Activated T-helper 2 cell treated with anti-CD3 and anti-CD28 coated beads, Interferon-gamma antibody, Interleukin-2, Interleukin-4, amounts not matched to agents 10 μg/mL and 5 μg/mL and 100 μg/mL, durations not matched to agents 14 hours and 24 hours and 36 hours (primary cell): ENCODE measurements at regions of chr6 and their contacts with region 1.

Region 1: GRCh38 chr6:89145787-89146646 is at the start of gene PM20D2:
- DNase-seq: peak; percentile 62
- H3K4me3 Mint-ChIP-seq: peak within 1 kb of the TSS; percentile 89
- H3K27ac Mint-ChIP-seq: peak within 1 kb of the TSS; percentile 98
- H3K4me1 Mint-ChIP-seq: peaks cover 35% of the 10 kb centered on the region
- H3K27me3 Mint-ChIP-seq: peaks cover 8% of the 10 kb centered on the region
- total RNA-seq, gene PM20D2: 14.8 and 15.3 TPM in 2 replicates

Region 2: GRCh38 chr6:88982720-88983119 is 163.3 kb before region 1 on chr6:
- intact Hi-C with region 1: loop called (anchors 10 kb)
- DNase-seq: no peak
- H3K4me3 Mint-ChIP-seq: no peak overlapping the region
- H3K27ac Mint-ChIP-seq: no peak overlapping the region
- H3K4me1 Mint-ChIP-seq: no peaks in the 10 kb centered on the region
- H3K27me3 Mint-ChIP-seq: peaks cover 10% of the 10 kb centered on the region

Region 3: DNA sequence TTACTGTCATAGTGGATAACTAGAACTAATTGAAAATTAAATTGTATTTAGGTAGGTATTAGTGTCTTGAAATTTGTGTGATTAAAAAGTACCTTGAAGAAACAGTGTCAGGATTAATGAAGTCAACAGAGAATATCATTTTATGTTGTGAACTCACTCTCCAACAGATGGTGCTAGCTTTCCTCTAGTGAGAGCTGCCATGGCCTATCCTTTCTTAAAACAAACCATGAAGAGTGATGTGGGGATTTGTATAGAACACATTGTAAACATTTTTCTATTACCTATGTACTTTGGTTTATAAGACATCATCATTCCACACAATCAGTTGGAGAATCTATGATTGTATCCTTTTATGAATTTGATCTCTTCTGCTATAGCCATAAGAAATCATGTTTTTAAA is 23.4 kb before region 1 on chr6:
- intact Hi-C with region 1: loop called (anchors 2 kb)
- DNase-seq: no peak
- H3K4me3 Mint-ChIP-seq: no peak overlapping the region
- H3K27ac Mint-ChIP-seq: no peak overlapping the region
- H3K4me1 Mint-ChIP-seq: peaks cover 1% of the 10 kb centered on the region
- H3K27me3 Mint-ChIP-seq: peaks cover 28% of the 10 kb centered on the region

Region 4: DNA sequence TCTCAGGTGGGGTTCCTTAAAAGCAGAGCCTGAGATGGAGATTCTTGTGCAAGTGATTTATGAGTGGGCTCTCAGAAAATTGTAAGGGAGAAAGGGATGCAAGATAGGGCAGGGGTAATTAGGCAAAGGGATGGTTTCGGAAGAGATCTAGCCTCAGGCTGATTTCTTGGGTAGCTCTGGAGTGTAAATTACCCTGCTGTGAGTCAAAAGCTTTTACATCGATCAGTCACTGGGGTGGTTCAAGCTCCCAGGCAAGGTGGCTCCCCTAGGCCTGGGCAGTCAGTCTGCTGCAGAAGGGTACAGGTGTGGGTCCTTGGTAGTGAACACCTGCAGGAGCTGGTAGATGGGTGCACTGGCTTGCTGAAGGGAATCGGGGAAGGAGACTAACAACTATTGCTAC is 11.3 kb before region 1 on chr6:
- intact Hi-C with region 1: no loop called
- DNase-seq: no peak
- H3K4me3 Mint-ChIP-seq: no peak overlapping the region
- H3K27ac Mint-ChIP-seq: no peak overlapping the region
- H3K4me1 Mint-ChIP-seq: no peaks in the 10 kb centered on the region
- H3K27me3 Mint-ChIP-seq: no peaks in the 10 kb centered on the region

Region 5: GRCh38 chr6:89186762-89187161 is 40.7 kb after region 1 on chr6:
- intact Hi-C with region 1: no loop called
- DNase-seq: no peak
- H3K4me3 Mint-ChIP-seq: no peak overlapping the region
- H3K27ac Mint-ChIP-seq: no peak overlapping the region
- H3K4me1 Mint-ChIP-seq: no peaks in the 10 kb centered on the region
- H3K27me3 Mint-ChIP-seq: peaks cover 3% of the 10 kb centered on the region

Region 6: GRCh38 chr6:89297695-89298351 is 151.8 kb after region 1 on chr6:
- intact Hi-C with region 1: loop called (anchors 5 kb)
- DNase-seq: peak; percentile 60
- H3K4me3 Mint-ChIP-seq: peak overlapping the region; percentile 37
- H3K27ac Mint-ChIP-seq: peak overlapping the region; percentile 83
- H3K4me1 Mint-ChIP-seq: peaks cover 25% of the 10 kb centered on the region
- H3K27me3 Mint-ChIP-seq: no peaks in the 10 kb centered on the region

Region 7: DNA sequence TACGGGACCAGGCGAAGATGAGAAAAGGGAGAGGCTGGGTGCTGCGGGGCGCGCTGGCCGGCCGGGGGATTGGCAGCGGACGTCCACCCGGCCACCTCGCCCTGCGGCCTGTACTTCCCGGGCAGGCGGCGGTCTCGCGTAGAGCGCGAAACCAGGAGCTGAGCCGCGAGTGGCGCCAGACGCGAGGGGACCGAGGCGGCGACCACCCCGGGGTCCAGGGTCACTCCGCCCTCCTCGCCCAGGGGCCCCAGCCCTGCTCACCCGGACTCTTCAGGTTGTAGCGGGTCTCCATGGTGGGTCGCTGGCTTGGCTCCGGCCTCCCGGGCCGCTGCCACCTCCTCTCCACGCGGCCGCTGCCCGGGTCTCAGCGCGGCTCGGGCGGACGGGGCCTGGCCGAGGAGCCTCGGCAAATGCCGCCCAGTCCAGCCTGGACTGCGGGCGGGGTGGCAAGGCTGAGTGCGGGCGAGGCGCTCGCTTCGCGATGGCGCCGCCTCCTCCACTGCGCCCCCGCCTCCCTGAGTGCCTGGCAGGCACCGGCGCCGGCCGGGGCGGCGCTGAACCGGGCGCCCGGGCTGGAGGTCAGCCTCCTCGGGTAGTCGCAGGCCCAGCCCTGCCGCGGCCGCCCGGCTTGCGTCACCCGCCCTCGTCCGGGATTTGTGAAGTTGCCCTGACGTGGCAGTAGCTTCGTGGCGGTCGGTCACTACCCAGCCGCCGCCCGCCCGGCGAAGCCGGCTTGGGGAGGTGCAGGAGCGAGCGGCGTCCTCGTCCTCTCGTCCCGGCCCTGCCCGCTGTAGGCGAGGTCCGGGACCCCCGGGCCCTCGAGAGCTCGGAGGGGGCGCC is 206.5 kb after region 1 on chr6 and contains the start of gene UBE2J1:
- intact Hi-C with region 1: loop called (anchors 5 kb)
- DNase-seq: peak; percentile 74
- H3K4me3 Mint-ChIP-seq: peak within 1 kb of the TSS; percentile 96
- H3K27ac Mint-ChIP-seq: peak within 1 kb of the TSS; percentile 92
- H3K4me1 Mint-ChIP-seq: peaks cover 66% of the 10 kb centered on the region
- H3K27me3 Mint-ChIP-seq: no peaks in the 10 kb centered on the region
- total RNA-seq, gene UBE2J1: 34.4 and 34.8 TPM in 2 replicates